ENCODE measurements at regions of chr3 and their contacts with region 1.

Region 1: GRCh38 chr3:71130471-71131374 is 452.8 kb downstream of the FOXP1 start:
- DNase-seq: peak in 1 of 2 donors; percentile 82
- ATAC-seq: peak; percentile 69
- H3K4me3 ChIP-seq: peak overlapping the region; percentile 89 to 99
- H3K27ac ChIP-seq: peak overlapping the region; percentile 98 to 99
- H3K4me1 ChIP-seq: peaks cover 0 to 2% of the 10 kb centered on the region in 2 donors
- H3K27me3 ChIP-seq: no peaks in the 10 kb centered on the region

Region 2: GRCh38 chr3:70999730-71000129 is 131.0 kb before region 1 on chr3:
- intact Hi-C with region 1: loop called in 1 of 2 experiments (anchors 10 kb)
- DNase-seq: no peak
- ATAC-seq: no peak
- H3K4me3 ChIP-seq: no peak overlapping the region
- H3K27ac ChIP-seq: no peak overlapping the region
- H3K4me1 ChIP-seq: peaks cover 10 to 15% of the 10 kb centered on the region in 2 donors
- H3K27me3 ChIP-seq: no peaks in the 10 kb centered on the region

Region 3: GRCh38 chr3:71160800-71161546 is 30.2 kb after region 1 on chr3:
- intact Hi-C with region 1: loop called (anchors 2 to 5 kb)
- DNase-seq: no peak
- ATAC-seq: no peak
- H3K4me3 ChIP-seq: no peak overlapping the region
- H3K27ac ChIP-seq: peak overlapping the region in 1 of 2 donors; percentile 43
- H3K4me1 ChIP-seq: peaks cover 5 to 8% of the 10 kb centered on the region in 2 donors
- H3K27me3 ChIP-seq: no peaks in the 10 kb centered on the region

Region 4: DNA sequence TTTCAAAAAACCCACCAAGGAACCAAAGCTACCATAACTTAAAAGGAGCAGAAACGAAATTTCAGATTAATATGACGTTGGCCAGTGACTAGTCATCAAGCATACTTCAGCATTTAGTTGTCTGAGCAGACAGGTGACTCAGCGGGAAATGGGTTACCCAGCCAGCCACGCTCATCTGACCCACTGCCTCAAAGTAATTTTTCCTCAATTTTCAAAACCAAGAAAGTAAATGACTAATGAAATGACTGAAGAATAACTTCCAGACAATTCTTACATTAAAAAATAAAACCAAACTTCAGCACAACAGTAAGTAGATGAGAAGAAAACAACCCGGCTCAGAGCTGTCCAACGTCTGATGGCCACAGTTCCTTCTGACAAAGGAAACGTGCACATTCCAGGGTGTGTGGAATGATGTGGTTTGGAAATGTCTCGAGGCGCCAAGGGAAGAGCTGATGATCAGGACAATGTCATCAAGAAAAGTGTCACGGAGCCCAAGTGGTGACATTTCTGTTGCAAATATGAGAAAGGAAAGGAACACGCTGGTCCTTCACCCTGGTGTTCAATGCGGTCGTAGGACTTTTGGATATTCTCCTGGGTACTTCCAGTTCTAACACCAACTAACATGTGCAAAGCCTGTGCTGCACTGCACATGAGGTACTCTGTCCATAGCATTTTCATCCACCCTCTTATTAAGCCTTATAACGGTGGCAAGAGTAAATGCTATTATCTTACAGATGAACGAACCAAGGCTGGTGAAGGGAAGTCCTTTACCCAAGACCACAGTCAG is 373.7 kb after region 1 on chr3:
- intact Hi-C with region 1: loop called in 1 of 2 experiments (anchors 10 kb)
- DNase-seq: peak in 1 of 2 donors; percentile 75
- ATAC-seq: no peak
- H3K4me3 ChIP-seq: no peak overlapping the region
- H3K27ac ChIP-seq: no peak overlapping the region
- H3K4me1 ChIP-seq: no peaks in the 10 kb centered on the region
- H3K27me3 ChIP-seq: no peaks in the 10 kb centered on the region

Measured in aorta (tissue), 5 donors.